ENCODE measurements at regions of chr17 and their contacts with region 1.

Region 1: GRCh38 chr17:55421179-55421934 is at the start of gene MMD:
- DNase-seq: no peak
- ATAC-seq: peak; percentile 10
- H3K4me3 ChIP-seq: peak within 1 kb of the TSS; percentile 94
- H3K27ac ChIP-seq: peak within 1 kb of the TSS; percentile 91
- H3K4me1 ChIP-seq: peaks cover 37% of the 10 kb centered on the region
- H3K27me3 ChIP-seq: no peaks in the 10 kb centered on the region
- CTCF ChIP-seq: no peak
- EP300 ChIP-seq: no peak
- POLR2A ChIP-seq: peak; percentile 67; the same call in 1 of the 2 replicates
- RAD21 ChIP-seq: no peak
- polyA plus RNA-seq, gene MMD: 8.0 to 12.1 TPM

Region 2: GRCh38 chr17:55259684-55260111 is 161.7 kb before region 1 on chr17:
- CTCF ChIA-PET with region 1: no interaction called
- POLR2A ChIA-PET with region 1: no interaction called
- RAD21 ChIA-PET with region 1: no interaction called
- SMC1A ChIA-PET with region 1: no interaction called
- in situ Hi-C with region 1: no loop called
- intact Hi-C with region 1: no loop called
- DNase-seq: no peak
- ATAC-seq: no peak
- H3K4me3 ChIP-seq: no peak overlapping the region
- H3K27ac ChIP-seq: no peak overlapping the region
- H3K4me1 ChIP-seq: peaks cover 4% of the 10 kb centered on the region
- H3K27me3 ChIP-seq: peaks cover 3 to 14% of the 10 kb centered on the region in 2 experiments; a peak in 3 of 4 replicates
- CTCF ChIP-seq: no peak
- EP300 ChIP-seq: no peak
- POLR2A ChIP-seq: no peak
- RAD21 ChIP-seq: no peak

Region 3: DNA sequence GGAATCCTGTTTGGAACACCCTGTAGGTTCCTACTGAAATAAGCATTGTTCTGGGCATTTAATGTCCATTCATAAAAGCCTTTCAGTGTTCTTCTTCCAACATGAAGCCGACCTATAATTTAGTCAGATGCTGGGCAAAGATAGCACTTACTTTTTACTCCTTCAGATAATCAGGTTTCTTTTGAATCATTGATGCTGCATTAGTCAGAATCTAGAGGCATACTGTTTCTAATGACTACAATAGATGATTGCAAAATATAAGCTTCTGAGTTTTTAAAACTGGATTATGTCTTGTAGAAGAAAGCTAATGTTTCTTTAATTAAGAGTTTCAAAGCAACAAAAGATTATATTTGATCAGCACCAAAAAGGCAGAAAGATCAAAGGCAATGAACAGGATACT is 15.8 kb before region 1 on chr17:
- CTCF ChIA-PET with region 1: interaction called, 5 read pairs
- POLR2A ChIA-PET with region 1: interaction called, 5 read pairs
- RAD21 ChIA-PET with region 1: interaction called, 3 read pairs
- SMC1A ChIA-PET with region 1: interaction called, 23 read pairs
- in situ Hi-C with region 1: no loop called
- intact Hi-C with region 1: no loop called
- DNase-seq: no peak
- ATAC-seq: no peak
- H3K4me3 ChIP-seq: no peak overlapping the region
- H3K27ac ChIP-seq: no peak overlapping the region
- H3K4me1 ChIP-seq: no peaks in the 10 kb centered on the region
- H3K27me3 ChIP-seq: no peaks in the 10 kb centered on the region
- CTCF ChIP-seq: no peak
- EP300 ChIP-seq: no peak
- POLR2A ChIP-seq: no peak
- RAD21 ChIP-seq: no peak

Region 4: DNA sequence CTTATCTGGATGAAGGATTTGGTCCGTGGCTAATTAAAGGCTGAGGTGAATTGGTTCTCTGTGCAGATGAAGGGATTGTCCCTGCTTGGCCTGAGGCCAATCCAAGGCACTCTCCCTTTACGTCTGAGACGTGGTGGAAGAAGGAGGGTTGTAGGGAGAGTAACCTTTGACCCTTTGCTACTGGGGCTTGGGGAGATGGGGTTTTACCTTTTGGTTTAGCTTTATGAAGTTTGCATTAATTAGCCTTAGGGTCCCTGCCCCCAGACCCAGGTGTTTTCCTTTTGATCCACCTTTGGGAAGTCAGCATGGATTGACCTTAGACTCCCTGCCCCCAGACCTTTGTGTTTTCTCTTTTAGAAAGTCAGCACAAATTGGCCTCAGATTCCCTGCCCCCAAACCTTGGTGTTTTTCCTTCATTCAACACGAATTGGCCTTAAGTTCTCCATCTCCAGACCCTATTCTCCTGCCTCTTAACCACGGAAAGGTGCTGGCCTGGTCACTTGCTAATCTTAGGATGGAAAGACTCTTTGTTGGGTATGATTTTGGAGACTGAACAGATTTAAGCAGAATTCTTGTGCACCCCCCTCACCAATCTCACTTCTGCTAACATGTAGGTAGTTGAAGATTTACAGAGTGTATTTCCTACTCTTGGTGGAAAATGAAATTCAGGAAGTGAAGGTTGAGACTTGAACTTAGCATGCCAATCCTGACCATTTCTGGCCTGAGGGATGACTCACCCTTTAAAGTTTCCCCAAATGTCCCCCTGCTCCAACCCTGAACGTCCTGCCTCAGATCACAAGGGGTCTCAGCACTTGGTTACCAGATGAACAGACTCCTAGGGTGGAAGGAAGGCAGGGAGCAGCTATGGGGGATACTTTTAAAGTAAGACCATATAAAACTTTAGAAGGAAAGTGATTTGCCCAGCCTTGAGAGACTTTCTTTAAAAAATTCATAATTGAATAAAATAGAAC is 23.4 kb after region 1 on chr17:
- CTCF ChIA-PET with region 1: interaction called, 5 read pairs
- POLR2A ChIA-PET with region 1: interaction called, 17 read pairs
- RAD21 ChIA-PET with region 1: interaction called, 9 read pairs
- SMC1A ChIA-PET with region 1: interaction called, 359 read pairs
- in situ Hi-C with region 1: no loop called
- intact Hi-C with region 1: no loop called
- DNase-seq: no peak
- ATAC-seq: peak; percentile 83
- H3K4me3 ChIP-seq: no peak overlapping the region
- H3K27ac ChIP-seq: peak overlapping the region; percentile 65
- H3K4me1 ChIP-seq: peaks cover 17% of the 10 kb centered on the region
- H3K27me3 ChIP-seq: no peaks in the 10 kb centered on the region
- CTCF ChIP-seq: no peak
- EP300 ChIP-seq: peak; percentile 35 to 87; a peak in 2 of 4 replicates
- POLR2A ChIP-seq: no peak
- RAD21 ChIP-seq: no peak

Region 5: GRCh38 chr17:55466671-55467070 is 45.3 kb after region 1 on chr17:
- CTCF ChIA-PET with region 1: interaction called, 3 read pairs
- POLR2A ChIA-PET with region 1: interaction called, 5 read pairs
- RAD21 ChIA-PET with region 1: interaction called, 12 read pairs
- SMC1A ChIA-PET with region 1: interaction called, 46 read pairs
- in situ Hi-C with region 1: no loop called
- intact Hi-C with region 1: no loop called
- DNase-seq: peak; percentile 55
- ATAC-seq: peak; percentile 51
- H3K4me3 ChIP-seq: no peak overlapping the region
- H3K27ac ChIP-seq: no peak overlapping the region
- H3K4me1 ChIP-seq: peaks cover 18% of the 10 kb centered on the region
- H3K27me3 ChIP-seq: no peaks in the 10 kb centered on the region
- CTCF ChIP-seq: no peak
- EP300 ChIP-seq: no peak
- POLR2A ChIP-seq: no peak
- RAD21 ChIP-seq: no peak

Region 6: GRCh38 chr17:55513885-55514591 is 92.7 kb after region 1 on chr17:
- CTCF ChIA-PET with region 1: interaction called, 32 read pairs
- POLR2A ChIA-PET with region 1: interaction called, 7 read pairs
- RAD21 ChIA-PET with region 1: interaction called, 27 read pairs
- SMC1A ChIA-PET with region 1: interaction called, 71 read pairs
- in situ Hi-C with region 1: loop called (anchors 5 kb)
- intact Hi-C with region 1: loop called (anchors 1 kb)
- DNase-seq: peak; percentile 59
- ATAC-seq: peak; percentile 91
- H3K4me3 ChIP-seq: no peak overlapping the region
- H3K27ac ChIP-seq: no peak overlapping the region
- H3K4me1 ChIP-seq: no peaks in the 10 kb centered on the region
- H3K27me3 ChIP-seq: no peaks in the 10 kb centered on the region
- CTCF ChIP-seq: peak; percentile 82 to 91 (median 90)
- EP300 ChIP-seq: no peak
- POLR2A ChIP-seq: no peak
- RAD21 ChIP-seq: peak; percentile 99

Region 7: DNA sequence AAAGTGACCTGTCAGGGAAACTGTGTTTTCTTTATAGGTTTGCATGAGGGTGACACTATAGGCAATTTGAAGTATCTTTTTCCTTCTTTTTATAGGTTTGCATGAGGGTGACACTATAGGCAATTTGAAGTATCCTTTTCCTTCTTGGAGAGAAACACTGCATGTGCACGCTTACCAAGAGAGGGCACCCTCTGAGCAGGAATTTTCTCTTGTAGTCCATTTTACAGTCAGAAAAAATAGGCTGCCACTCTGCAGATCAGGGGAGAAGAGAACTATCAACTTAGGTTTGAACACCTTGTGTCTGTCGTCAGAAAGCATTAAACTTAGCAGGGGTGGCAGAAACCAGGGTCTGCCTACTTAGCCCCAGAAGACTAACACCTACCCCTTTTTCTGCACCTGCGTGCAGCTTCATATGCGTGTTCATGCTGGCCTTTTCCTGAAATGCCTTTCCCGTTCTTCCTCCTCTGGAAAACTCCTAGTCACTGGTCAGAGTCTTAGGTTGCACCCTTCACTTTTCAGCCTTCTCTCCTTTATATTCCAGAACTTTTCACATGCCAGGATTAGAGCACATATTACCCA is 106.3 kb after region 1 on chr17:
- CTCF ChIA-PET with region 1: no interaction called
- POLR2A ChIA-PET with region 1: no interaction called
- RAD21 ChIA-PET with region 1: no interaction called
- SMC1A ChIA-PET with region 1: no interaction called
- in situ Hi-C with region 1: no loop called
- intact Hi-C with region 1: no loop called
- DNase-seq: no peak
- ATAC-seq: 0 out of 3 replicates have a peak, but pooled peaks have one; percentile 18
- H3K4me3 ChIP-seq: no peak overlapping the region
- H3K27ac ChIP-seq: no peak overlapping the region
- H3K4me1 ChIP-seq: 0 out of 2 replicates have a peak, but pooled peaks cover 3% of the 10 kb centered on the region
- H3K27me3 ChIP-seq: no peaks in the 10 kb centered on the region; a peak in 1 of 4 replicates
- CTCF ChIP-seq: peak; percentile 22 to 45 (median 44); a peak in 5 of 6 replicates
- EP300 ChIP-seq: no peak
- POLR2A ChIP-seq: no peak
- RAD21 ChIP-seq: peak; percentile 61